Activated naive CD4-positive, alpha-beta T cell treated with anti-CD3 and anti-CD28 coated beads for 36 hours (primary cell): ENCODE measurements at regions of chr17 and their contacts with region 1.

Region 1: GRCh38 chr17:74873038-74873873 is 462 bp upstream of the FDXR start:
- DNase-seq: peak; percentile 100
- H3K4me3 Mint-ChIP-seq: peak overlapping the region; percentile 88
- H3K27ac Mint-ChIP-seq: peak overlapping the region; percentile 91
- H3K4me1 Mint-ChIP-seq: peaks cover 27% of the 10 kb centered on the region
- H3K27me3 Mint-ChIP-seq: no peaks in the 10 kb centered on the region

Region 2: GRCh38 chr17:74776044-74776977 is 96.9 kb before region 1 on chr17 and contains the start of gene NAT9:
- CTCF ChIA-PET with region 1: no interaction called
- intact Hi-C with region 1: loop called (anchors 5 kb)
- DNase-seq: peak; percentile 98
- H3K4me3 Mint-ChIP-seq: peak within 1 kb of the TSS; percentile 100
- H3K27ac Mint-ChIP-seq: peak within 1 kb of the TSS; percentile 89
- H3K4me1 Mint-ChIP-seq: peaks cover 62% of the 10 kb centered on the region
- H3K27me3 Mint-ChIP-seq: no peaks in the 10 kb centered on the region
- total RNA-seq, gene NAT9: 42.1 to 43.9 TPM

Region 3: DNA sequence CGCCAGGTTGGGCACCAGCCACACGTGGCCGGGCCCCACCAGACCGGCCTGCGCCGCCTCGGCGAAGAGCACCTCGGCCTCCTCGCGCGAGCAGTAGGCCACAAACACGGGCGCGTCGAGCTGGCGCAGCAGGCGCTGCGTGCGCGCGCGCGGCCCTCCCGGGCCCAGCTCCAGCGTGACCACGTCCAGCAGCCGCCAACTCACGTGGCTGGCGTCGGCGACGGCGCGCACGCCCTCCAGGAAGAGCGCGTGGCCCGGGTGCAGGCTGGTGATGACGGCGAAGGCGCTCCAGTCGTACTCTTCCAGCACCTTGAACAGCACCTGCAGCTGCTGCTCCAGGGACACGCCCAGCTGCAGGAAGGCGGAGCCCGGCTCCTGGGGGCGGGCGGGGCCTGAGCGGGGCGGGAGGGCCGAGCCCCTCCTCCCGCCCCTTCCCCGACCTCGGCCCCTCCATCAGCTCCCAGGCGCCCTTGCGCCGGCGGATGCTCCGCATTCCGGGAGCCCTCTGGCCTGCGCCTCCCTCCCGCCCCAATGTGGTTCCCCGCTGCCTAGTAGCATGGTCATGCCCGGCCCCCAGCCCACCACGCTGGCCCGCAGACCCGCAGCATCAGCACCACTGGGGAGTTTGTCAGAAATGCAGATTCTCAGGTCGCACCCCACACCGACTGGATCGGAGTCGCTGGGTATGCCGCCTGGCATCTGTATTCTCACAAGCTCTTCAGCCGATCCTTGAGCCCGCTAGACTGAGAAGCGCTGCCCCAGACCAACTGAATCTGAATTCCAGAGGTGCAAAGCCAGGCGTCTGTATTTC is 20.8 kb before region 1 on chr17:
- CTCF ChIA-PET with region 1: no interaction called
- intact Hi-C with region 1: loop called (anchors 1 kb)
- DNase-seq: peak; percentile 64
- H3K4me3 Mint-ChIP-seq: peak overlapping the region; percentile 71
- H3K27ac Mint-ChIP-seq: no peak overlapping the region
- H3K4me1 Mint-ChIP-seq: peaks cover 3% of the 10 kb centered on the region
- H3K27me3 Mint-ChIP-seq: peaks cover 43% of the 10 kb centered on the region

Region 4: DNA sequence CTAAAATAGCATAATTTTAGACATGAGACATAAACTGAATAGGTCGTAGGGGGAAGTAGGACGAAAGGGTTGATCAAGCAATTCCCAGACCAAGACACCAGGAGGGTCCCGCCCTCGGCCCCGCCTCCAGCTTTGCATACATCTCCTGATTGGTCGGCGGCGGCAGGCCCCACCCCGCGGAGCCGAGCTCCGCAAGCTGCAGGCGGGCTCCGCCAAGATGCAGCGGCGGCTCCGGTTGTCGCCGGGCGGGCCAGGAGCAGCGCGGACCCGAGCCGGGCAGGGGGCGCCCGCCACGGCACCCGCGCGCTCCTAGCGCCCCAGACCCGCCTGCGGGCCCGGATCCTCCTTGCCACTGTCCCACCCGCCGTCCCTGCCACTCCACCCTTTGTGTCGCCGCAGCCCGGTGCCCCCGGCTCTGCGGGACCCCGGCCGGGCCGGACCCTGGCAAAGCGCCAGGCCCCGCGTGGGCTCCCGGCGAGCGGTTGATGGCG is 114.2 kb after region 1 on chr17 and contains the start of gene CDR2L:
- CTCF ChIA-PET with region 1: no interaction called
- intact Hi-C with region 1: loop called (anchors 1 kb)
- DNase-seq: peak; percentile 94
- H3K4me3 Mint-ChIP-seq: peak within 1 kb of the TSS; percentile 80
- H3K27ac Mint-ChIP-seq: no peak within 1 kb of the TSS
- H3K4me1 Mint-ChIP-seq: peaks cover 8% of the 10 kb centered on the region
- H3K27me3 Mint-ChIP-seq: peaks cover 9% of the 10 kb centered on the region
- total RNA-seq, gene CDR2L: 0.49 to 0.93 TPM

Region 5: DNA sequence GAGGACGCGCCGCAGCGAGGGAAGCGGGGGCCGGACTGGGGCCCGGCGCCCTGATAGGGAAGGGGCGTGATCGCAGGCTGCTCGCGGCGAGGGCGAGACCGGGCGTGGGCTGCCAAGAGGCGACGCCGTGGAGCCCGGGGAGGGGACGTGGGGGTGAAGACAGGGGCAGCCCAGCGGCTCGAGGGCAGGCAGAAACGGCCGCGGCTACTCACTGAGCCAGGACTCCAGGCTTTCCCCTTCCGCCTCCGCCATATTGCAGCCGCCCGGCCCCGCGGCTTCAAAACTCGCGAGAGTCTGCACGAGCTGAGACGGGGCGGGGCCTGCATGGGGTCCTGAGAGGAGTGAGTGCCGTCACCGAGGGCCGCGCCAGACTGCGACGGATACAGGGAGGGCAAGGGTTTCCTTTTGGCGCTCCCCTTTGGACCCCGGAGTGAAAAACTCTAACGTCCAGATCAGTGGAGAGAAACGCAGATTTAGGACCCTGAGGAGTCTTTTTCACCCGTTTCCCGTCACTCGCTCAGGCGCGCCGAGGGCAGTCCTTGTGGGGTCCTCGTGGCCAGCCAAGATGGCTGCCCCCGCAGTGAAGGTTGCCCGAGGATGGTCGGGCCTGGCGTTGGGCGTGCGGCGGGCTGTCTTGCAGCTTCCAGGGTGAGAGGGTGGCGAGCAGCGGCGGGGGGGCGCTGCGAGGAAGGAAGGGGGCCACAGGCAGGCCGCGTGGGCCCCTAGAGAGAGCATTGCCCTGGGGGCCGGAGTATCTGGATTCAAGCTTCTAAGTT is 388.3 kb after region 1 on chr17 and contains the starts of genes GGA3 and MRPS7:
- CTCF ChIA-PET with region 1: no interaction called
- intact Hi-C with region 1: loop called (anchors 1 kb)
- DNase-seq: peak; percentile 98
- H3K4me3 Mint-ChIP-seq: peak within 1 kb of the TSS; percentile 93
- H3K27ac Mint-ChIP-seq: peak within 1 kb of the TSS; percentile 99
- H3K4me1 Mint-ChIP-seq: peaks cover 53% of the 10 kb centered on the region
- H3K27me3 Mint-ChIP-seq: no peaks in the 10 kb centered on the region
- total RNA-seq, gene GGA3: 65.7 to 66.1 TPM
- total RNA-seq, gene MRPS7: 73.3 to 78.3 TPM

Region 6: DNA sequence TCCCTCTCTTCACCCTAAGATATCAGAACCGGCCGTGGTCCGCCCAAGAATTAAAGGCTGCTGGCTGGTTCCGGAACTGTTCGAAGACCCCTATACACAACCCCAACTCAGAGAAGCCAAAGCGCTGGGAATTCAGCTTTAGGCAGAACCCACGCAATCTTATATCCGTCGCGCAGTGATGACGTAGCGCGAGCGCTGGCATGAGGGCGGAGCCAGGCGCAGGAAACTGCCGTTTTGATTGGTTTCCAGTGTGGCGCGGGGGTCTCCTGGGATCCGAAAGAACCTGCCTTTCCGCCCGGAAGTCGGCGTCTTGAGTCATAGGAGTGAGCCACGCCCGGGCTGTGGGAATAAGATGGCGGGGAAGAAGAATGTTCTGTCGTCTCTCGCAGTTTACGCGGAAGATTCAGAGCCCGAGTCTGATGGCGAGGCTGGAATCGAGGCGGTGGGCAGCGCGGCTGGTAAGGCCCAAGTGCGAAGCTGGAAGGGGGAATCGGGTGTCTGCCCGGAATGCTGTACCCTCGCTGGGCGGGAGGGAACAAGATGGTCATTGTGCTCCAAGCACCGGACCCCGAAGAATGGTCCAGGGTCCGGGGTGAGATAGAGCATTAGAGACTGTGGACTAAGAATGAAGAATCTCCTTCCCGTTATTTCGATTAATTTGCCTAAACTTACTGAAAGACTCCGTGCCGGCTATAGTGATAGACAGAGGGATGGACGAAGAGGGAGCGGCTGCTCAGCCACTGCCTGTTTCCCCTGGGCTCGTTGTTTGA is 794.0 kb after region 1 on chr17 and contains the starts of genes RECQL5 and SAP30BP:
- CTCF ChIA-PET with region 1: no interaction called
- intact Hi-C with region 1: loop called (anchors 10 kb)
- DNase-seq: peak; percentile 99
- H3K4me3 Mint-ChIP-seq: peak within 1 kb of the TSS; percentile 64
- H3K27ac Mint-ChIP-seq: no peak within 1 kb of the TSS
- H3K4me1 Mint-ChIP-seq: peaks cover 35% of the 10 kb centered on the region
- H3K27me3 Mint-ChIP-seq: no peaks in the 10 kb centered on the region
- total RNA-seq, gene RECQL5: 36.2 to 44.0 TPM
- total RNA-seq, gene SAP30BP: 68.3 TPM